ENCODE measurements at regions of chr6 and their contacts with region 1.

Region 1: DNA sequence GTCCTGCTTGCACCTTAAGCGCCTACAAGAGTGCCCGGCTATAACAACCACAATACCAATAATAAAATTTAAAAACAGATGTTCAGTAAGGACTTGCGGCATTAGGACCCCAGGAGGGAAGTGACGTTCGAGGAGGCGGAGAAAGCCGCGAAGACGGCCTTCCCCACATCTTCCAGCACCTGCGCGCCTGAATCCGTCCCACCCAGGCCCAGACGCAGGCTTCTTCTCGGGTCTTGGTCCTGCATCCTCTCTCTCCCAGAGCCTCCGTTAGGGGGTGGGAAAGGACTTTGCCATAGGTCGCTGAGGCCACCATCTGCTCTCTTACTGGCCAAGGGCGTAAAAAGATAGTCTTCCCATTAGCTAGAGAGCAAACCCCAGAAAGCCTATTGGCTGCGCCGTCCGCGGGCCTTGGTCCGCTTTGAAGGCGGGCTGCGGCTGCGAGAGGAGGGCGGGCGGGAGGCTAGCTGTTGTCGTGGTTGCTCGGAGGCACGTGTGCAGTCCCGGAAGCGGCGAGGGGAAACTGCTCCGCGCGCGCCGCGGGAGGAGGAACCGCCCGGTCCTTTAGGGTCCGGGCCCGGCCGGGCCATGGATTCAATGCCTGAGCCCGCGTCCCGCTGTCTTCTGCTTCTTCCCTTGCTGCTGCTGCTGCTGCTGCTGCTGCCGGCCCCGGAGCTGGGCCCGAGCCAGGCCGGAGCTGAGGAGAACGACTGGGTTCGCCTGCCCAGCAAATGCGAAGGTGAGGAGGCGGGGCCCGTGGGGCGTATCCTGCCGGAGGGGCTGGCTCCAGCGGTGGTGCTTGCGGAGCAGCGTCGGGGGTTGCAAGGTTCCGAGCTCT is at the start of gene CNPY3:
- DNase-seq: peak; percentile 91 to 93
- ATAC-seq: peak; percentile 95 to 97 (median 96)
- H3K4me3 ChIP-seq: peak within 1 kb of the TSS; percentile 48 to 89 (median 78)
- H3K27ac ChIP-seq: peak within 1 kb of the TSS; percentile 74 to 96 (median 93)
- H3K4me1 ChIP-seq: peaks cover 0 to 54% (median 18%) of the 10 kb centered on the region in 9 donors
- H3K27me3 ChIP-seq: peaks cover 0 to 7% (median 0%) of the 10 kb centered on the region in 7 donors
- CTCF ChIP-seq: peak in 2 of 9 donors; percentile 13 to 18
- total RNA-seq, gene CNPY3: 10.4 to 37.1 (median 15.9) TPM

Region 2: DNA sequence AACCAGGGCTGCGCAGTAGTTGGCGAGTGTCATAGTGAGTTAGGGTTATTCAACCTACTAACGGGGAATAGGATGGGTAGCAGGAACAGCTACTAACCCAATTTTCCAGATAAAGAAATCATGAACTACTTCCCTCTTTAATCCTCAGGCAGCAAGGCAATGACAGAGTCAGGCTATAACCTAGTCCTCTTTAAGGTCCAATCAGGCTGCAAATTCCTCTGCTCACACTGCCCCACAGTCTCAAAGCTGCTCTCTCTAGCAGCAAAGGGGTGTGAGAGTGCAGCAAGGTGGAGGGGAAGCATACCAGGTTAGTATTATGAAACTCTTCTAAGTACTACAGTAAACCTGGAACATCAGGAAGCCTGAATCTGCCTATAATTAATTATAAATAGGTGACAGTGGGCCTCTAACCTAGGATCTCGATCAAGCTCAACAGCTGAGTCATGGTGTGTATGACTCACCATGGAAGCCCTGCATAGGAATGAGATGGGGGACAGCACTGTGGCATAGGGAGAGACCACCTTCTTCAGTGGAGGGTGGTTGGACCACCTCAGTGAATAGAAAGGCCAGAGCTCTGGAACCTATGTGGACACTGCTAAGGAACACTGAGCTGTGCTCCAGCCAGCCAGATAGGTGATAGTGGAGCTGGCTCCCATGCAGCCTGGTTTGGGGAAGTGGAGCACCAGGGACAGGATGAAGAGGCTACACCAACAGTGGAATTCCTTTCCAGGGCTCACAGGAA is 41.8 kb after region 1 on chr6:
- intact Hi-C with region 1: loop called in 3 of 10 experiments (anchors 2 to 5 kb)
- DNase-seq: no peak
- ATAC-seq: peak in 5 of 8 donors; percentile 20 to 45 (median 37)
- H3K4me3 ChIP-seq: no peak overlapping the region
- H3K27ac ChIP-seq: no peak overlapping the region
- H3K4me1 ChIP-seq: peaks cover 0 to 12% (median 6%) of the 10 kb centered on the region in 9 donors
- H3K27me3 ChIP-seq: no peaks in the 10 kb centered on the region
- CTCF ChIP-seq: no peak

Region 3: DNA sequence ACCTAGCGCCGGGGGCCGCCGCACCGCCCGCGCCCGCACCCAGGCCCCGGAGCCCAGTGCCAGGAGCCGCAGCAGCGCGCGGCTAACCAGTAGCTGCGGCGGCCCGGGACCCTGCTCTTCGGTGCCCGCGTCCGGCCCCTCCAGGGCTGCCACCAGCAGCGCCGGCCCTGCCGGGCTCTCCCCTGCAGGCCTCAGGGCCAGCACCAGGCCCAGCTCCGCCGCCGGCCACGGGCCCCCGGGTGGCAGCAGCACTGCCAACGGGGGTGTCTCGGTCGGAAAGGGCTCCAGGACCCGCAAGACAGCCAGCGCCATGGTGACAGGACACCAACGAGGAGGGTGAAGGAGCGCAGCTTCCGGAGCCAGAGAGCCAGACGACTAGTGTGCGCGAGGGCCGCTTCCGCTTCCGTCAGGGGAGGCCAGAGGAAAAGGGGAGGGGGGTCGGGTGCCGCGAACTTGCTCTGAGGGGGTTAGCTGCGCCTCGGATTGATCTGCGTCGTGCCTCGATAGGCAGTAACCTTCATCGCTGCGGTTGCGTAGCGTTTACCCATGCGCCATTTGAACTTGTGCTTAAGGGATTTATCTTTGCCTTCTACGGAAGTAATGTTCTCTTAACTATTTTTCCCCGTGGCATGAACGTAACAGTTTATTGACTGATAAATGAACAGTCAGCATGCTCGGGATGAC is 49.8 kb after region 1 on chr6 and contains the start of gene PEX6:
- intact Hi-C with region 1: loop called in 2 of 10 experiments (anchors 5 kb)
- DNase-seq: peak; percentile 92 to 93
- ATAC-seq: peak; percentile 93 to 97 (median 96)
- H3K4me3 ChIP-seq: peak within 1 kb of the TSS; percentile 72 to 98 (median 90)
- H3K27ac ChIP-seq: peak within 1 kb of the TSS; percentile 81 to 97 (median 92)
- H3K4me1 ChIP-seq: peaks cover 7 to 54% (median 27%) of the 10 kb centered on the region in 9 donors
- H3K27me3 ChIP-seq: no peaks in the 10 kb centered on the region
- CTCF ChIP-seq: no peak
- total RNA-seq, gene PEX6: 11.2 to 32.6 (median 17.2) TPM

Region 4: GRCh38 chr6:43059168-43060033 is 130.2 kb after region 1 on chr6 and contains the starts of genes KLC4 and MRPL2:
- intact Hi-C with region 1: loop called in 2 of 10 experiments (anchors 1 to 10 kb)
- DNase-seq: peak; percentile 96 to 99
- ATAC-seq: peak; percentile 95 to 99 (median 98)
- H3K4me3 ChIP-seq: peak within 1 kb of the TSS; percentile 73 to 96 (median 85)
- H3K27ac ChIP-seq: peak within 1 kb of the TSS; percentile 72 to 97 (median 89)
- H3K4me1 ChIP-seq: peaks cover 8 to 33% (median 30%) of the 10 kb centered on the region in 9 donors
- H3K27me3 ChIP-seq: no peaks in the 10 kb centered on the region
- CTCF ChIP-seq: no peak
- total RNA-seq, gene KLC4: 26.3 to 34.2 (median 28.3) TPM
- total RNA-seq, gene MRPL2: 76.0 to 139 (median 93.5) TPM

Measured in heart right ventricle (tissue), 16 donors.